CD4-positive, alpha-beta memory T cell (primary cell): ENCODE measurements at regions of chr3 and their contacts with region 1.

Region 1: DNA sequence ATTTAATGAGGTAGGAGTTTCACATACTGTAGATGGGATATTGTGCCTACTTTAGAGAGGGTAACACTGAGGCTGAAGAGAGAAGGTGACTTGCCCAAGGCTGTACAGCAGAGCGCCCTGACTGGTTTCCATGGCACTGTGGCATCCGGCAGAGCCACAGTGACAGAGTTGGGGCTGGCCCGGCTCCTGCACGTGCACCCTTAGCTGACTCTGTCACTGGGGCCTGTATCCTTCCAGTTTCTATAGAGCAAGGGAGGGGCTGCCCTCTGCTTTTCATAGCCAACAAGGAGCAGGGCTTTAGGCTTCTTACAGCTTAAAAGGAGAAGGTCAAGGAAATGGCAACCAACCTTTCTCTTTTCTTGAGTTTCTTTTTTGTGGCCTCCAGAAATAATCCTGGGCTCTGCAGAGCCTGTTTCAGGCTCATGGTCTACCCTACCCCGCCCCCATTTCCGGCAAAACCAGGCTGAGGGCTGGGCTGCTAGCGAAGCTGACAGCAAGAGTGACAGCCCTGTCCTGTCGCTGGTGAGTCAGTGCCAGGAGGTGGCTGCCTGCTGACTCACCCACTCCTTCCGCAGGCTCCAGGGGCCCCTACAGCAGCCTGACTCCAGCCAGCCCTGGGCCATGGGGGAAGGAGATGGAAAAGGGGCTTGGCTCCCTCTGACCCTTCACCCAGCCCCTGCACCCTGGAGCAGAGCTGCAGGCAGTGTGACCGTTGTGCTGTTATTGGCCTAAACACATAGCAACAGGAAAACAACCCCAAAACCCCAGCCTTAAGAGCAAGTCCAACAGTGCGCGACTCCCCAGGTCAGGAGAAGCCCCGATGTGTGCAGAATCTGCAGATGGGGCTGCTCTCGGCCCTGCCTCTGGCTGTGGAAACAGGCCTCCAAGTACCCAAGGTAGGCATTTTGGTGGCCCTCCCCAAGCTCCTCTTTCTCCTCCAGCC is 29.8 kb downstream of the SLC6A6 start:
- DNase-seq: peak; percentile 93 to 99 (median 94)
- H3K4me3 ChIP-seq: peak overlapping the region; percentile 55 to 77
- H3K4me3 Mint-ChIP-seq: peak overlapping the region; percentile 77 to 93 (median 80)
- H3K27ac ChIP-seq: peak overlapping the region; percentile 98
- H3K27ac Mint-ChIP-seq: peak overlapping the region; percentile 97 to 100 (median 100)
- H3K4me1 ChIP-seq: peaks cover 97% of the 10 kb centered on the region
- H3K4me1 Mint-ChIP-seq: peaks cover 64 to 98% (median 87%) of the 10 kb centered on the region in 4 donors
- H3K27me3 ChIP-seq: no peaks in the 10 kb centered on the region
- H3K27me3 Mint-ChIP-seq: no peaks in the 10 kb centered on the region

Region 2: GRCh38 chr3:14170531-14171173 is 261.5 kb before region 1 on chr3:
- CTCF ChIA-PET with region 1: no interaction called
- POLR2A ChIA-PET with region 1: no interaction called
- intact Hi-C with region 1: no loop called
- DNase-seq: no peak
- H3K4me3 ChIP-seq: no peak overlapping the region
- H3K4me3 Mint-ChIP-seq: peak overlapping the region in 1 of 8 donors; percentile 20
- H3K27ac ChIP-seq: no peak overlapping the region
- H3K27ac Mint-ChIP-seq: peak overlapping the region in 3 of 7 donors; percentile 10 to 74 (median 29)
- H3K4me1 ChIP-seq: peaks cover 33% of the 10 kb centered on the region
- H3K4me1 Mint-ChIP-seq: peaks cover 31 to 69% (median 57%) of the 10 kb centered on the region in 4 donors
- H3K27me3 ChIP-seq: no peaks in the 10 kb centered on the region
- H3K27me3 Mint-ChIP-seq: no peaks in the 10 kb centered on the region

Region 3: DNA sequence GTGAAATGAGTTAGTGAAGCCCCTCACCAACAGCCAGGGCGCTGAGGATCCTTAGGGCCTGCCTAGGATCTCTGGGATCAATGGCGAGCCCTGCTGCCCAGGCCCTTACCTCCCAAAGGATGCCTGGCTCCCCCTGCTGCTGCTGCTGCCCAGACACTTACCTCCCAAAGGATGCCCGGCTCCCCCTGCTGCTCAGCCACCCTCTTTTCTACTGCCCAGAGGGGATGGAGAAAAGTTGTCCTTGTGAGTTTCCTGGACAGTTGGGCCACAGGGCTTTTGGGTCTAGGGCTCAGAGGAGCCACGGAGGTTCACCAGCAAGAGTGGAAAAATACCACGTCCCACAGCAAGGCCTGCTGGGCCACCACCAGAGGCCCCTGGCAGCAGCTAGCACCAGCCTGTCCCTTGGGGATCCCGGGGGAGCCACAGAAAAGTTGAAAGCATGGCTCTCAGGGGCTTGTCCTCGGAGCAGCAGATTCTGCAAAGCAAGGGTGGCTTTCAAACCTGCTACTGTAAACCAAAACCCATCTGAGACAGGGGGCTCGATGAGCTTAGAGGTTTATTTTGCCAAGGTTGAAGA is 29.7 kb after region 1 on chr3:
- CTCF ChIA-PET with region 1: interaction called, 44 read pairs
- POLR2A ChIA-PET with region 1: interaction called, 28 read pairs
- intact Hi-C with region 1: loop called (anchors 2 kb)
- DNase-seq: peak in 4 of 5 donors; percentile 30 to 38 (median 32)
- H3K4me3 ChIP-seq: no peak overlapping the region
- H3K4me3 Mint-ChIP-seq: no peak overlapping the region
- H3K27ac ChIP-seq: no peak overlapping the region
- H3K27ac Mint-ChIP-seq: peak overlapping the region in 3 of 7 donors; percentile 23 to 73 (median 41)
- H3K4me1 ChIP-seq: no peaks in the 10 kb centered on the region
- H3K4me1 Mint-ChIP-seq: peaks cover 0 to 5% (median 3%) of the 10 kb centered on the region in 4 donors
- H3K27me3 ChIP-seq: no peaks in the 10 kb centered on the region
- H3K27me3 Mint-ChIP-seq: no peaks in the 10 kb centered on the region

Region 4: DNA sequence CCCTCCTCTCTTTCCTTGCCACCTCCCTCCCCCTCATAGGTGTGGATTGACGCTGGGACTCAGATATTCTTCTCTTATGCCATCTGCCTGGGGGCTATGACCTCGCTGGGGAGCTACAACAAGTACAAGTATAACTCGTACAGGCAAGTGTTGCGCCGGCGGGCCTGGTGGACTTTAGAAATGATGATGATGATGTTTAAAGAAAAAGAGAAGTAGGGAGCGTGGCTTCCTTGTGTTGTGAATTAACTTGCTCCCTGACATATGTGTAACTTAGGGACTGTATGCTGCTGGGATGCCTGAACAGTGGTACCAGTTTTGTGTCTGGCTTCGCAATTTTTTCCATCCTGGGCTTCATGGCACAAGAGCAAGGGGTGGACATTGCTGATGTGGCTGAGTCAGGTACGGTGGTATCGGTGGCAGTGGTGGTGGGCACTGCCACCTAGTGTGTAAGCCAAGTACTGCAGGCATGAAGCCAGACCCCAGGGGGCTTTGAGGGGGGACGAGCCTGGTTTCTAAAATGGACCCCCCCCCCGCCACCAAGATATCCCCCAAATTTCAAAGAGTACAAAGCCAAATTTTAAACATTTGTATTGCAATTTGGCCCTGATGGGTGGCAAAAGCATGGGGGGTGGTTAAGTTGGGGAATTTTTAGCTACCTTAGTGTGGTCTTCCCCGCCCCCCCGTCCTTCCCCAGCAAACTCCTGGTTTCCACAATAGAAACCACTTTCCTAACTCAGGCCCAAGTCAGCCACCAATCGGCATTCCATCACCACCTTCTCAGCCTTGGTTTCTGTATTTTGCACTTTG is 35.9 kb after region 1 on chr3:
- CTCF ChIA-PET with region 1: interaction called, 44 read pairs
- POLR2A ChIA-PET with region 1: interaction called, 28 read pairs
- intact Hi-C with region 1: no loop called
- DNase-seq: peak in 4 of 5 donors; percentile 26 to 42 (median 36)
- H3K4me3 ChIP-seq: no peak overlapping the region
- H3K4me3 Mint-ChIP-seq: no peak overlapping the region
- H3K27ac ChIP-seq: no peak overlapping the region
- H3K27ac Mint-ChIP-seq: peak overlapping the region in 4 of 7 donors; percentile 36 to 81 (median 54)
- H3K4me1 ChIP-seq: no peaks in the 10 kb centered on the region
- H3K4me1 Mint-ChIP-seq: peaks cover 0 to 2% (median 0%) of the 10 kb centered on the region in 4 donors
- H3K27me3 ChIP-seq: no peaks in the 10 kb centered on the region
- H3K27me3 Mint-ChIP-seq: no peaks in the 10 kb centered on the region

Region 5: DNA sequence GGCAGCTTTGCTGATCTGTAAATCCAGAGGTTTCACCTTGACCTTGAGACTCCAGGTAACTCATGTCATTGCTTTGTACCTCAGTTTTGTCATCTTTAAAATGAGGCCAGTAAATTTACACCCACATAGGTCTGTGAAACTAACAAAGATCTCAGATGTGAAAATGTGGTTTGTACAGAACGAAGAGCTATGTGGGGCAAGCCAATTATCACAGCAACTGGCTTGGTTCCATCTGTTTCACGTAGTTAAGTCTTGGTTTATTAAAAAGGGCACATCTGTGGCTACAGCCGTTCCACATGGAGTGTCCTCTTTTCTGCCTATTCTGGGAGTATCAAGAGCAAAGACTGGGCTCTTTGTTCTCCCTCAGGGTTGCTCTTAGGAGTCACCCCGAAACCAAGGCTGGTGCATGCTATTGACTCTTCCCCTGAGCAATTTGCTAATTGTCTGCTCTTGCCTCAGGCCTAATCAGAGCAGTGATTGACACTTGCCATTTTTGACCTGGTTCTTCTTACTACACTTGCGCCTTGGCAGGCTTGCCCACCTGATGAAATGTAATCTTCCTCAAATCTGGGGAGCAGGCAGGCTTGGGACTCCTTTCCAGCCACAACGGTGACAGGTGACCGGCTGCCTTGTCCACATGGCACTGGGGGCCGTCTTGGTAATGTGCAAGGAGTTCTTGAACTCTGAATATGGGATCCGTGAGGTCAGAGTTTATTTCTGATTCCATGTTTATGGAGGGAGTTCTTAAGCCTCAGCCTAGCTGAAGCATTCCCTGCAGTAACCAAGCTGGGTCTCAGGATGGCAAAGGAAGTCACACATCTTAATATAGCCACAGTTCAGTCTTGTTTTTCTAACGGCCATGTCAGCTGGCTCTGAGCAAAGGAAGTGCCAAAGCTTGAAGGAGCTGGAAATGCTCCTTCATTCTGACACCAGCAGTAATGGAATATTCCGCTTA is 1035.3 kb after region 1 on chr3:
- CTCF ChIA-PET with region 1: no interaction called
- POLR2A ChIA-PET with region 1: no interaction called
- intact Hi-C with region 1: no loop called
- DNase-seq: no peak
- H3K4me3 ChIP-seq: no peak overlapping the region
- H3K4me3 Mint-ChIP-seq: peak overlapping the region in 1 of 8 donors; percentile 4
- H3K27ac ChIP-seq: no peak overlapping the region
- H3K27ac Mint-ChIP-seq: peak overlapping the region in 6 of 7 donors; percentile 0 to 68 (median 28)
- H3K4me1 ChIP-seq: no peaks in the 10 kb centered on the region
- H3K4me1 Mint-ChIP-seq: peaks cover 1 to 26% (median 8%) of the 10 kb centered on the region in 4 donors
- H3K27me3 ChIP-seq: no peaks in the 10 kb centered on the region
- H3K27me3 Mint-ChIP-seq: no peaks in the 10 kb centered on the region